Natural killer cell (primary cell): ENCODE measurements at regions of chr15 and their contacts with region 1.

Region 1: GRCh38 chr15:50876989-50877360 is 31.5 kb upstream of the AP4E1 start:
- DNase-seq: peak; percentile 50 to 88
- ATAC-seq: peak; percentile 49 to 65 (median 59)
- H3K4me3 ChIP-seq: peak overlapping the region; percentile 30
- H3K4me3 Mint-ChIP-seq: peak overlapping the region; percentile 82
- H3K27ac ChIP-seq: no peak overlapping the region
- H3K27ac Mint-ChIP-seq: peak overlapping the region; percentile 56 to 79
- H3K4me1 ChIP-seq: peaks cover 16% of the 10 kb centered on the region
- H3K4me1 Mint-ChIP-seq: peaks cover 24 to 38% of the 10 kb centered on the region in 2 donors
- H3K27me3 ChIP-seq: no peaks in the 10 kb centered on the region
- H3K27me3 Mint-ChIP-seq: peaks cover 7 to 8% of the 10 kb centered on the region in 2 donors
- CTCF ChIP-seq: peak; percentile 99

Region 2: GRCh38 chr15:50675536-50676144 is 201.3 kb before region 1 on chr15:
- intact Hi-C with region 1: loop called (anchors 1 kb)
- DNase-seq: peak in 1 of 2 donors; percentile 64
- ATAC-seq: peak in 2 of 3 donors; percentile 26 to 52
- H3K4me3 ChIP-seq: no peak overlapping the region
- H3K4me3 Mint-ChIP-seq: no peak overlapping the region
- H3K27ac ChIP-seq: peak overlapping the region; percentile 25
- H3K27ac Mint-ChIP-seq: peak overlapping the region; percentile 4 to 71
- H3K4me1 ChIP-seq: no peaks in the 10 kb centered on the region
- H3K4me1 Mint-ChIP-seq: peaks cover 17 to 19% of the 10 kb centered on the region in 2 donors
- H3K27me3 ChIP-seq: no peaks in the 10 kb centered on the region
- H3K27me3 Mint-ChIP-seq: no peaks in the 10 kb centered on the region
- CTCF ChIP-seq: peak; percentile 85

Region 3: DNA sequence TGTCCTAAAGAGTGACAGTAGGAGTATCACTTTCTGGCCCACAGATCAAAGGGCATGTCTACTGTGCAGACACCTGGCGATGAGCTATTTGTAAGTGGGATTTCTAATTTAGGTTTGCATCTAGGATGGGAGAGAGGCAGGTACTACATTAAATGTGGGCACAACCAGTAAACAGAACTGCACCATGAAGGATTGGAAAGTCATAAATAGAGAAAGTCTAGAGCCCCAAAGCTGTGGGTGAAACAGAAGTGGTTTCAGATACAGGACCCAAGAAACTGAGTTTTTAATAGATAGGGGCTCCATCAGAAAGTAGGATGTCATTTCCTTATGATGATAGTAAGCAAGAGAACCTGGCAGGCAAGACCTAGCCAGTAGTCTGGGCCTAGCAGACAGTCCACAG is 76.3 kb before region 1 on chr15:
- intact Hi-C with region 1: loop called (anchors 10 kb)
- DNase-seq: no peak
- ATAC-seq: no peak
- H3K4me3 ChIP-seq: no peak overlapping the region
- H3K4me3 Mint-ChIP-seq: no peak overlapping the region
- H3K27ac ChIP-seq: no peak overlapping the region
- H3K27ac Mint-ChIP-seq: no peak overlapping the region
- H3K4me1 ChIP-seq: no peaks in the 10 kb centered on the region
- H3K4me1 Mint-ChIP-seq: no peaks in the 10 kb centered on the region
- H3K27me3 ChIP-seq: no peaks in the 10 kb centered on the region
- H3K27me3 Mint-ChIP-seq: no peaks in the 10 kb centered on the region
- CTCF ChIP-seq: no peak